ENCODE measurements at regions of chr15 and their contacts with region 1.

Region 1: GRCh38 chr15:78872972-78873792 is 492 bp downstream of the MORF4L1 start:
- DNase-seq: peak; percentile 69 to 84 (median 76)
- H3K4me3 ChIP-seq: peak overlapping the region; percentile 63 to 100 (median 97)
- H3K27ac ChIP-seq: peak overlapping the region; percentile 91 to 100 (median 100)
- H3K27me3 ChIP-seq: no peaks in the 10 kb centered on the region
- CTCF ChIP-seq: peak in 52 of 56 donors; percentile 15 to 75 (median 50)

Region 2: GRCh38 chr15:78739996-78740903 is 132.9 kb before region 1 on chr15:
- intact Hi-C with region 1: no loop called
- DNase-seq: peak in 1 of 10 donors; percentile 21
- H3K4me3 ChIP-seq: no peak overlapping the region
- H3K27ac ChIP-seq: no peak overlapping the region
- H3K27me3 ChIP-seq: no peaks in the 10 kb centered on the region
- CTCF ChIP-seq: peak in 7 of 56 donors; percentile 8 to 20 (median 17)

Region 3: GRCh38 chr15:78750566-78750965 is 122.6 kb before region 1 on chr15:
- intact Hi-C with region 1: loop called (anchors 5 kb)
- DNase-seq: peak in 3 of 10 donors; percentile 14 to 40 (median 22)
- H3K4me3 ChIP-seq: peak overlapping the region in 38 of 59 donors; percentile 1 to 51 (median 28)
- H3K27ac ChIP-seq: peak overlapping the region in 19 of 59 donors; percentile 3 to 82 (median 46)
- H3K27me3 ChIP-seq: no peaks in the 10 kb centered on the region
- CTCF ChIP-seq: no peak

Region 4: GRCh38 chr15:78767331-78767951 is 105.7 kb before region 1 on chr15:
- intact Hi-C with region 1: loop called in 1 of 2 experiments (anchors 5 kb)
- DNase-seq: peak in 3 of 10 donors; percentile 3 to 40 (median 39)
- H3K4me3 ChIP-seq: no peak overlapping the region
- H3K27ac ChIP-seq: no peak overlapping the region
- H3K27me3 ChIP-seq: no peaks in the 10 kb centered on the region
- CTCF ChIP-seq: no peak

Region 5: GRCh38 chr15:78800189-78800588 is 73.0 kb before region 1 on chr15:
- intact Hi-C with region 1: no loop called
- DNase-seq: no peak
- H3K4me3 ChIP-seq: no peak overlapping the region
- H3K27ac ChIP-seq: no peak overlapping the region
- H3K27me3 ChIP-seq: no peaks in the 10 kb centered on the region
- CTCF ChIP-seq: no peak

Region 6: GRCh38 chr15:78811124-78811824 is 61.9 kb before region 1 on chr15 and contains the start of gene ADAMTS7:
- intact Hi-C with region 1: loop called in 1 of 2 experiments (anchors 5 kb)
- DNase-seq: peak in 7 of 10 donors; percentile 28 to 62 (median 42)
- H3K4me3 ChIP-seq: peak within 1 kb of the TSS; percentile 48 to 81 (median 67)
- H3K27ac ChIP-seq: peak within 1 kb of the TSS in 16 of 59 donors; percentile 3 to 68 (median 40)
- H3K27me3 ChIP-seq: peaks cover 0 to 30% (median 7%) of the 10 kb centered on the region in 45 donors
- CTCF ChIP-seq: peak; percentile 17 to 79 (median 60)
- total RNA-seq, gene ADAMTS7: 0.48 to 5.1 (median 1.7) TPM

Region 7: GRCh38 chr15:78992416-78993256 is 119.5 kb after region 1 on chr15:
- intact Hi-C with region 1: no loop called
- DNase-seq: peak in 2 of 10 donors; percentile 26 to 35
- H3K4me3 ChIP-seq: no peak overlapping the region
- H3K27ac ChIP-seq: peak overlapping the region in 1 of 59 donors; percentile 26
- H3K27me3 ChIP-seq: no peaks in the 10 kb centered on the region
- CTCF ChIP-seq: no peak

Region 8: DNA sequence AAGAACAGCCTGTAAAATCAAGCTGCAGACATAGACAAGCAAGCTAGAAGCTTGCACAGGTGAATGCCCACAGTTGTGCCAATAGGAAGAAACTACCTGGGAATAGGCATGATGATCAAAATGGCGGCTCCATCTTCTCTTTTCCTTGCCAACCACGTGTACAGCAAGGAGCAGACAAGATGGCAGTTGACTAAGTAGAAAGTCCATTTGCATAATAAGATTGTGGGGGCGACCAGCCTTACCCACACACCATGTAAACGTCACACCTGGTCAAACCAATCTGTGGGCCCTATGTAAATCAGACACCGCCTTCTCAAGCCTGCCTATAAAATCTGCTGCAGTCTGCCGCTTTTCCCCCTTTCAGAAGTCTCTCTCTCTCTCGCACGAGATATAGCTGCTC is 384.3 kb after region 1 on chr15:
- intact Hi-C with region 1: no loop called
- DNase-seq: no peak
- H3K4me3 ChIP-seq: no peak overlapping the region
- H3K27ac ChIP-seq: no peak overlapping the region
- H3K27me3 ChIP-seq: peaks cover 0 to 5% (median 0%) of the 10 kb centered on the region in 45 donors
- CTCF ChIP-seq: no peak

Measured in dorsolateral prefrontal cortex (tissue), 120 donors.